A673 (cell line): ENCODE measurements at regions of chr12 and their contacts with region 1.

Region 1: GRCh38 chr12:68358532-68359485 is 26.6 kb upstream of the MDM1 start:
- DNase-seq: peak; percentile 87
- H3K4me3 ChIP-seq: no peak overlapping the region
- H3K27ac ChIP-seq: peak overlapping the region; percentile 17
- H3K4me1 ChIP-seq: peaks cover 8% of the 10 kb centered on the region
- H3K27me3 ChIP-seq: no peaks in the 10 kb centered on the region
- CTCF ChIP-seq: peak; percentile 74

Region 2: GRCh38 chr12:68610370-68611093 is 251.7 kb after region 1 on chr12 and contains the start of gene RAP1B:
- CTCF ChIA-PET with region 1: no interaction called
- POLR2A ChIA-PET with region 1: no interaction called
- intact Hi-C with region 1: loop called (anchors 5 kb)
- DNase-seq: peak; percentile 94
- H3K4me3 ChIP-seq: peak within 1 kb of the TSS; percentile 91
- H3K27ac ChIP-seq: peak within 1 kb of the TSS; percentile 94
- H3K4me1 ChIP-seq: peaks cover 23% of the 10 kb centered on the region
- H3K27me3 ChIP-seq: no peaks in the 10 kb centered on the region
- CTCF ChIP-seq: no peak
- total RNA-seq, gene RAP1B: 134 and 148 TPM in 2 replicates

Region 3: GRCh38 chr12:68686595-68687521 is 328.0 kb after region 1 on chr12 and contains the start of gene NUP107:
- CTCF ChIA-PET with region 1: no interaction called
- POLR2A ChIA-PET with region 1: no interaction called
- intact Hi-C with region 1: loop called (anchors 2 kb)
- DNase-seq: peak; percentile 98
- H3K4me3 ChIP-seq: peak within 1 kb of the TSS; percentile 74
- H3K27ac ChIP-seq: peak within 1 kb of the TSS; percentile 66
- H3K4me1 ChIP-seq: peaks cover 14% of the 10 kb centered on the region
- H3K27me3 ChIP-seq: no peaks in the 10 kb centered on the region
- CTCF ChIP-seq: no peak
- total RNA-seq, gene NUP107: 127 and 128 TPM in 2 replicates

Region 4: GRCh38 chr12:68750506-68750905 is 391.7 kb after region 1 on chr12:
- CTCF ChIA-PET with region 1: no interaction called
- POLR2A ChIA-PET with region 1: no interaction called
- intact Hi-C with region 1: no loop called
- DNase-seq: no peak
- H3K4me3 ChIP-seq: no peak overlapping the region
- H3K27ac ChIP-seq: no peak overlapping the region
- H3K4me1 ChIP-seq: peaks cover 12% of the 10 kb centered on the region
- H3K27me3 ChIP-seq: no peaks in the 10 kb centered on the region
- CTCF ChIP-seq: no peak

Region 5: GRCh38 chr12:68786929-68787328 is 428.1 kb after region 1 on chr12:
- CTCF ChIA-PET with region 1: no interaction called
- POLR2A ChIA-PET with region 1: interaction called, 11 read pairs
- intact Hi-C with region 1: no loop called
- DNase-seq: no peak
- H3K4me3 ChIP-seq: no peak overlapping the region
- H3K27ac ChIP-seq: no peak overlapping the region
- H3K4me1 ChIP-seq: no peaks in the 10 kb centered on the region
- H3K27me3 ChIP-seq: no peaks in the 10 kb centered on the region
- CTCF ChIP-seq: 0 out of 2 replicates have a peak, but pooled peaks have one; percentile 16